ENCODE measurements at regions of chr19 and their contacts with region 1.

Region 1: DNA sequence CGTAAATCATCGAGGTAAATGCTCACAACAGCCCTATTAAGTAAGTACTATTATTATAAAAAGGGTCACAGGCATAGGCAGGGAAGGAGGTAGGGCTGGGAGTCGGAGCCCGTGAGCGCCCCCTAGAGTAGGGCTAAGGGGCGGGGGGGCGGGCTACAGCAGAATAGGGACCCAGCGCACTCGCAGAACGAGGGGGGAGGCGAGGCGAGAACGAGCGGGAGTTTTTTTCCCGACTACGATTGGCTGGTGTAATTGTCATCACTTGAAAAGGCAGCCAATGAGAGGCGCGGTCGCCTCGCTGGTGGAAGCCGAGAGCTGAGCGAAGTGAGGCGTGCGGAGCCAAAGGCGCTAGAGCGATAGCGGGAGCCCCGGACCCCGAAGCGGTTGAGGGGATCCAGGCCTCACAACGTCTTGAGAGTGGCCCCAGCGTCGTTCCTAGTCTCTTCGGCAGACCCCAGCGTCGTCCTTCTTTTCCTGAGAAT is 24.2 kb downstream of the KEAP1 start:
- DNase-seq: peak; percentile 80 to 89
- H3K4me3 ChIP-seq: peak overlapping the region in 1 of 4 experiments; percentile 36; a peak in 2 of 8 replicates
- H3K27ac ChIP-seq: no peak overlapping the region
- H3K4me1 ChIP-seq: peaks cover 0 to 4% (median 0%) of the 10 kb centered on the region in 4 experiments; a peak in 2 of 7 replicates
- H3K27me3 ChIP-seq: peaks cover 6 to 11% (median 9%) of the 10 kb centered on the region in 4 experiments
- CTCF ChIP-seq: peak; percentile 43 to 61 (median 51)
- EP300 ChIP-seq: no peak
- POLR2A ChIP-seq: no peak
- RAD21 ChIP-seq: peak in 1 of 2 experiments; percentile 36; a peak in 2 of 4 replicates

Region 2: DNA sequence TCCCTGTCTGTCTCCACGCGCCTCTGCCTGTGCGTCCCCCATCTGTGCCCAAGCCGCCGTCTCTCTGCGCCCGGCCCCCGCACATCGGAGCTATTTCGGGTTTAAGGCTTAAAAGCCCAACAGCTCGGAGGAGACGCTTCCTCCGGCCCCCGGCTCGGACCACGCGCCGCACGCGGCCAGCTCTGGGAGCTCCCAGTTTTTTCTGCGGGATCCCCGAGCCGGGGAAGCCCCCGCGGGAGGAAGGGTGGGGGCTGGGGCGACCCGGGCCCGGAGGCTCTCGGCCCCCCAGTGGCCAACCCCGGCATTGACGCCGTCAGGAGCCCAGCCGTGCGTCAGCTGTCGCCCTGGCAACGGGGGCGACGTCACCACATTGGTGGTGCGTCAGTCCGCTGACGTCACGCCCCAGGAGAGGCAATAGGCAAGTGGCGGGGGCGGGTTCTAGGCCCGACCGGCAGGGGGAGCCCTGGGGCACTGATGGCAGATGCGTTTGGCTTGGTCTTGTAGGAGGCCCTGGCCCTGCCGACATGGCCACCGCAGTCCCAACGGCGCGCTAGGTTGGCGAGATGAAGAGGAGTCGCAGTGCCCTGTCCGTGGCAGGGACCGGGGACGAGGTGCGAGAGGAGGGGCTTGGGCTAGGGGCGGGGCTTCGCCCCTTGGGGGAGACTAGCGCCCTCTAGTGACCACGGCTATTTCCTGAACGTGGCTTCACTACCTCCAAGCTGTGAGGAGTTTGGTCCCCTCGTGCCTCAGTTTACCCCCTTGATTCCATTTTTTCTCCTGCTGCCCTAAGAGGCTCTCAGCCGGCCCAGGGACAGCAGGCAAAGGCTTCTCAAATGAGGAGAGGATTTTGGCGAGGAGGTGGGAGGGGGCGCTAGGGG is 62.3 kb before region 1 on chr19:
- CTCF ChIA-PET with region 1: interaction called, 10 read pairs
- POLR2A ChIA-PET with region 1: no interaction called
- DNase-seq: peak; percentile 83 to 100
- H3K4me3 ChIP-seq: peak overlapping the region; percentile 42 to 66 (median 54)
- H3K27ac ChIP-seq: no peak overlapping the region
- H3K4me1 ChIP-seq: peaks cover 5 to 26% (median 13%) of the 10 kb centered on the region in 4 experiments
- H3K27me3 ChIP-seq: peaks cover 25 to 62% (median 52%) of the 10 kb centered on the region in 4 experiments
- CTCF ChIP-seq: peak; percentile 69 to 79 (median 78)
- EP300 ChIP-seq: peak in 1 of 2 experiments; percentile 85; a peak in 1 of 3 replicates
- POLR2A ChIP-seq: no peak
- RAD21 ChIP-seq: peak; percentile 28 to 30; a peak in 3 of 4 replicates

Region 3: GRCh38 chr19:10442698-10443097 is 36.2 kb before region 1 on chr19:
- CTCF ChIA-PET with region 1: no interaction called
- POLR2A ChIA-PET with region 1: no interaction called
- DNase-seq: no peak
- H3K4me3 ChIP-seq: no peak overlapping the region
- H3K27ac ChIP-seq: no peak overlapping the region
- H3K4me1 ChIP-seq: no peaks in the 10 kb centered on the region
- H3K27me3 ChIP-seq: 0 out of 7 replicates have a peak, but pooled peaks cover 0 to 1% (median 0%) of the 10 kb centered on the region in 4 experiments
- CTCF ChIP-seq: no peak
- EP300 ChIP-seq: no peak
- POLR2A ChIP-seq: no peak
- RAD21 ChIP-seq: no peak

Region 4: GRCh38 chr19:10467104-10467706 is 11.7 kb before region 1 on chr19:
- CTCF ChIA-PET with region 1: interaction called, 29 read pairs
- POLR2A ChIA-PET with region 1: interaction called, 3 read pairs
- DNase-seq: no peak
- H3K4me3 ChIP-seq: no peak overlapping the region; a peak in 1 of 8 replicates
- H3K27ac ChIP-seq: no peak overlapping the region
- H3K4me1 ChIP-seq: peaks cover 0 to 16% (median 10%) of the 10 kb centered on the region in 4 experiments; a peak in 6 of 7 replicates
- H3K27me3 ChIP-seq: peaks cover 0 to 5% (median 0%) of the 10 kb centered on the region in 4 experiments; a peak in 2 of 7 replicates
- CTCF ChIP-seq: no peak
- EP300 ChIP-seq: no peak
- POLR2A ChIP-seq: no peak
- RAD21 ChIP-seq: no peak

Region 5: GRCh38 chr19:10491472-10492047 is 12.6 kb after region 1 on chr19:
- CTCF ChIA-PET with region 1: interaction called, 78 read pairs
- POLR2A ChIA-PET with region 1: interaction called, 6 read pairs
- DNase-seq: no peak
- H3K4me3 ChIP-seq: no peak overlapping the region
- H3K27ac ChIP-seq: no peak overlapping the region
- H3K4me1 ChIP-seq: no peaks in the 10 kb centered on the region
- H3K27me3 ChIP-seq: no peaks in the 10 kb centered on the region
- CTCF ChIP-seq: no peak
- EP300 ChIP-seq: no peak
- POLR2A ChIP-seq: no peak
- RAD21 ChIP-seq: no peak

Region 6: DNA sequence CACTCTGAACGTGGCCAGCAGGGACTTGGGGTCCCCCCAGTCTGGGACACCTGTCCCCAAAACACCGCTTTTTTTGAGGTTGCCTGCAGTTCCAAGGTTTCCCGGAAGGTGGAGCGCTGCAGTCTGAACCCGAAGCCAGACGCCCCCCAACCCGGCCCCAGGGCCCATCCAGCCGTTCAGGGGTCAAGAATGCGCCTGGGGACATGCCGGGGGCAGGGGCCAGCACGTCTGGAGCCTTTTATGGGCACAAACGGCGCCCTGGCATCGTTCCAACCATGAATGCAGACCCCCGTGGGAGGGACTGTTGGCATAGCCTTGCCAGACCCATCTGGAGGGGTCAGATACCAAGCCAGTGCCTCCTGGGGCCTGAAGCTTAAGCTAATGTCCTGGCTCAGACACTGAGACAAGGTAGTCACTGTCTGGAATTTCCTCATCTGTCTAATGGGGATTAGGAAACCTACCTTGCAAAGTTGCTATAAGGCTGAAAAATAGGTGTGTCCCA is 31.4 kb after region 1 on chr19:
- CTCF ChIA-PET with region 1: interaction called, 23 read pairs
- POLR2A ChIA-PET with region 1: no interaction called
- DNase-seq: peak in 1 of 2 experiments; percentile 98
- H3K4me3 ChIP-seq: no peak overlapping the region; a peak in 1 of 8 replicates
- H3K27ac ChIP-seq: no peak overlapping the region
- H3K4me1 ChIP-seq: peaks cover 0 to 15% (median 8%) of the 10 kb centered on the region in 4 experiments; a peak in 6 of 7 replicates
- H3K27me3 ChIP-seq: peaks cover 24 to 30% (median 29%) of the 10 kb centered on the region in 4 experiments; a peak in 6 of 7 replicates
- CTCF ChIP-seq: peak; percentile 64 to 81 (median 77)
- EP300 ChIP-seq: no peak
- POLR2A ChIP-seq: no peak
- RAD21 ChIP-seq: peak; percentile 27 to 55; a peak in 3 of 4 replicates

Measured in H1 (cell line).